Activated B cell treated with CpG ODN at 0.5 μM for 24 hours (primary cell): ENCODE measurements at regions of chr15 and their contacts with region 1.

Region 1: DNA sequence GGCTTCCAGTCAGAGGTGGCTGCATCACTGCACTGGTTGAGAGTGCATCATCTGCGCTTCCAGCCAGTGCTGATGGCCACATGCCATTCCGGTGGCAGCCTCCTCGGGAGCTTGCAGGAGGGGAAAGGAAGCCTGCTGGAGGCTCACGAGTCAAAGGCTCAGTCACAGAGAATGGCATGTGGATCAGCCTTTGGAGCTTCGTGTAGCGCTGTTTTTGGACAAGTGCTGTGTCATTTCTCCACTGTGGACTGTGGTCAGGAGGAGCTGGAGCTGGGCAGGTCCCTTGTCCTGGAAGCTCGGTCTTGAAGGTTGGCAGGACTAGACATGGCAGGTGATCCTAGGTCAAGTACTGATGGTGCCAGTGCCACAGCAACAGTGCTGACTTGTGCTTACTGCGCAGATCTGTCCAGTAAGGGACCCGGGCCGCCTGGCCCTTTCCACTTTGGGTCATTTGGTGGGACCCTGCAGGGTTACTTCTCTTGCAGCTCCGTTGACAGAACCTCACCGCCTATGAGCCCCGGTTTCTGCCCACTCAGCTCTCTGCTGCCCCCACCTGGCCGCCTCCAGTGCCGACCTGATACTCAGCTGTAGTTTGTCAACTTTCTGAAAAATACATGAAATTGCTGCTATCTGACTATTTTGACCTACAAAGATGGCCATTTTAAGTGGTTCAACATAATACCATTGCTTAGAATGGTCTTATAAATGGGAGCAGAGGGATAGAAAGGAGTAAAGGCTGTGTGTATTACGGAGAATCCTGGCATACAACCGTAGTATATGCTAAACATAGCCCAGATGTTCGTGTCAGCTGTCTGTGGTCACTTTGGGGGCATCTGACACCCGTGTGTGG is 27.6 kb upstream of the TRPM1 start:
- DNase-seq: peak; percentile 83
- ATAC-seq: peak; percentile 96
- H3K4me3 Mint-ChIP-seq: no peak overlapping the region
- H3K27ac Mint-ChIP-seq: no peak overlapping the region
- H3K4me1 Mint-ChIP-seq: peaks cover 10% of the 10 kb centered on the region
- H3K27me3 Mint-ChIP-seq: no peaks in the 10 kb centered on the region
- CTCF ChIP-seq: peak; percentile 89

Region 2: GRCh38 chr15:30889196-30889595 is 239.9 kb before region 1 on chr15:
- CTCF ChIA-PET with region 1: interaction called, 23 read pairs
- POLR2A ChIA-PET with region 1: no interaction called
- intact Hi-C with region 1: loop called (anchors 1 kb)
- DNase-seq: no peak
- ATAC-seq: no peak
- H3K4me3 Mint-ChIP-seq: no peak overlapping the region
- H3K27ac Mint-ChIP-seq: no peak overlapping the region
- H3K4me1 Mint-ChIP-seq: peaks cover under 1% of the 10 kb centered on the region
- H3K27me3 Mint-ChIP-seq: peaks cover 2% of the 10 kb centered on the region
- CTCF ChIP-seq: no peak

Region 3: GRCh38 chr15:30940359-30940758 is 188.8 kb before region 1 on chr15:
- CTCF ChIA-PET with region 1: interaction called, 8 read pairs
- POLR2A ChIA-PET with region 1: no interaction called
- intact Hi-C with region 1: loop called (anchors 5 kb)
- DNase-seq: no peak
- ATAC-seq: no peak
- H3K4me3 Mint-ChIP-seq: no peak overlapping the region
- H3K27ac Mint-ChIP-seq: no peak overlapping the region
- H3K4me1 Mint-ChIP-seq: no peaks in the 10 kb centered on the region
- H3K27me3 Mint-ChIP-seq: no peaks in the 10 kb centered on the region
- CTCF ChIP-seq: no peak

Region 4: DNA sequence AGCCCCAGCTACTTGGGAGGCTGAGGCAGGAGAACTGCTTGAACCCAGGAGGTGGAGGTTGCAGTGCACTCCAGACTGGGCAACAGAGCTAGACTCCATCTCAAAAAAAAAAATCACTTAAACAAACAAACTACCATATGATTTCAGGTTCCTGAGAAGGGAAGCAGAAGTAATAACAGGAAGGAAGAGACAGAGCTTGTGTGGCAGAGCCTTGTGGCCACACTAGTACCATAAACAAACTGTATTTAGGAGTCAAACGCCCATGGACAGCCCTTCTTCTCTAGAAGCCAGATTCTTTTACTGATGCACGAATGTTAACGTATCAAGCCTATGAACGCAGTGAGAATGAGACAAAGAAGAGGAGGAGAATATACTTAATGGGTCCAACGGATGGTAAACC is 149.7 kb before region 1 on chr15:
- CTCF ChIA-PET with region 1: interaction called, 41 read pairs
- POLR2A ChIA-PET with region 1: no interaction called
- intact Hi-C with region 1: loop called (anchors 2 kb)
- DNase-seq: no peak
- ATAC-seq: peak; percentile 42
- H3K4me3 Mint-ChIP-seq: peak overlapping the region; percentile 25
- H3K27ac Mint-ChIP-seq: peak overlapping the region; percentile 62
- H3K4me1 Mint-ChIP-seq: peaks cover 77% of the 10 kb centered on the region
- H3K27me3 Mint-ChIP-seq: no peaks in the 10 kb centered on the region
- CTCF ChIP-seq: no peak

Region 5: DNA sequence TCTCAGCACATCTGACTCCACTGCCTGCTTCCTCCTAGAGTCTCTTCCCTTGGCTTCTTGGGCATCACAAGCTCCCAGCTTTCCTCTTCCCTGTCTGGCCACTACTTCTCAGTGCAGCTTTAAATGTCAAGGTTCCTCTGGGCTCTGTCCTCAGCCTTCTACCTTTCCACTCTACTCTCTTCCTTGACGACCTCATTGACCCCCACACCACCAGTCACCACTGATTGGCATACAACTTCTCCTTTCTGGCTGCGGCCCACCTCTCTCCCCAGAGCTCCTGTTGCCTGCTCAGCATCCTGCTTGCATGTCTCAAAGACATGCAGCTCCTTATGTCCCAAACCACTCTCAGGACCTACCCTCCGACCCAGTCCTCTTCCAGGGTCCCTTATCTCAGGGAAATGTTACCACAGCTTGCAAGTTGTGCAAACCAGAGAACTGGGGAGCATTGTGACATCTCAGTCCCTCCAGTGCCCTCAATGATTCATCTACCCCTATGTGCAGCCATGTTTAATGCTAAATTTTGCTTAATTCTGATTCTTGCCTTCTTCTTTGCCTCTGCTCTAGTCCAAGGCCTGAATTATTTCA is 77.6 kb before region 1 on chr15:
- CTCF ChIA-PET with region 1: no interaction called
- POLR2A ChIA-PET with region 1: no interaction called
- intact Hi-C with region 1: no loop called
- DNase-seq: no peak
- ATAC-seq: no peak
- H3K4me3 Mint-ChIP-seq: no peak overlapping the region
- H3K27ac Mint-ChIP-seq: peak overlapping the region; percentile 20
- H3K4me1 Mint-ChIP-seq: peaks cover 64% of the 10 kb centered on the region
- H3K27me3 Mint-ChIP-seq: no peaks in the 10 kb centered on the region
- CTCF ChIP-seq: no peak

Region 6: DNA sequence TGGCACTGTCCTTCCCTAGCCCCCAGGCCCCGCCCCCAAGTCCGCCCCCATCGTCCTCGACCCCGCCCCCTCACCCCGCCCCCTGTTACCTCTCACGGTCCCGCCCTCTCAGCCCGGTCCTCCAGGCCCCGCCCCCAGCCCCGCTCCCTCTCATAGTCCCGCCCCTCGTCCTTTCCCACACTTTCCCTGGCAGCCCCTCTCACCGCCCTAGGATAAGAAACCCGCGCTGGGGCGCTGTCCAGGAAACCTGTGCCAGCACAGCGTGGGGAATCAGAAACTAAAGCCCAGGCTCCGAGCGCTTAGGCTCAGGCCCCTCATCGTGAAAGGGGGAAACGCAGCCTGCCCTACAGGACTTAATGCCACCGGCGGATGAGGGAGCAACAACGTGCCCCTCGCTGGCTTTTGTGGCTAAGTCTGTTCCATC is 48.5 kb before region 1 on chr15:
- CTCF ChIA-PET with region 1: interaction called, 3 read pairs
- POLR2A ChIA-PET with region 1: no interaction called
- intact Hi-C with region 1: loop called (anchors 5 kb)
- DNase-seq: peak; percentile 42
- ATAC-seq: peak; percentile 90
- H3K4me3 Mint-ChIP-seq: peak overlapping the region; percentile 83
- H3K27ac Mint-ChIP-seq: no peak overlapping the region
- H3K4me1 Mint-ChIP-seq: peaks cover 49% of the 10 kb centered on the region
- H3K27me3 Mint-ChIP-seq: no peaks in the 10 kb centered on the region
- CTCF ChIP-seq: no peak